Posterior vena cava (tissue), 2 donors: ENCODE measurements at regions of chr6 and their contacts with region 1.

Region 1: GRCh38 chr6:33029328-33030184 is 20.2 kb upstream of the HLA-DOA start:
- DNase-seq: no peak

Region 2: GRCh38 chr6:32087574-32088486 is 941.7 kb before region 1 on chr6:
- intact Hi-C with region 1: no loop called
- DNase-seq: peak; percentile 96

Region 3: GRCh38 chr6:33049323-33050013 is 19.9 kb after region 1 on chr6:
- intact Hi-C with region 1: loop called in 1 of 2 experiments (anchors 2 kb)
- DNase-seq: no peak